Endothelial cell of umbilical vein (primary cell): ENCODE measurements at regions of chr17 and their contacts with region 1.

Region 1: GRCh38 chr17:64281962-64282727 is 19.1 kb upstream of the TEX2 start:
- DNase-seq: peak; percentile 87
- H3K4me3 ChIP-seq: no peak overlapping the region
- H3K27ac ChIP-seq: no peak overlapping the region
- H3K4me1 ChIP-seq: peaks cover 17% of the 10 kb centered on the region
- H3K27me3 ChIP-seq: no peaks in the 10 kb centered on the region
- CTCF ChIP-seq: peak; percentile 58 to 61
- POLR2A ChIP-seq: no peak

Region 2: GRCh38 chr17:64051153-64051552 is 231.0 kb before region 1 on chr17:
- CTCF ChIA-PET with region 1: no interaction called
- POLR2A ChIA-PET with region 1: no interaction called
- dilution Hi-C with region 1: no loop called
- intact Hi-C with region 1: no loop called
- DNase-seq: no peak
- H3K4me3 ChIP-seq: no peak overlapping the region
- H3K27ac ChIP-seq: no peak overlapping the region
- H3K4me1 ChIP-seq: no peaks in the 10 kb centered on the region
- H3K27me3 ChIP-seq: no peaks in the 10 kb centered on the region
- CTCF ChIP-seq: no peak
- POLR2A ChIP-seq: no peak

Region 3: DNA sequence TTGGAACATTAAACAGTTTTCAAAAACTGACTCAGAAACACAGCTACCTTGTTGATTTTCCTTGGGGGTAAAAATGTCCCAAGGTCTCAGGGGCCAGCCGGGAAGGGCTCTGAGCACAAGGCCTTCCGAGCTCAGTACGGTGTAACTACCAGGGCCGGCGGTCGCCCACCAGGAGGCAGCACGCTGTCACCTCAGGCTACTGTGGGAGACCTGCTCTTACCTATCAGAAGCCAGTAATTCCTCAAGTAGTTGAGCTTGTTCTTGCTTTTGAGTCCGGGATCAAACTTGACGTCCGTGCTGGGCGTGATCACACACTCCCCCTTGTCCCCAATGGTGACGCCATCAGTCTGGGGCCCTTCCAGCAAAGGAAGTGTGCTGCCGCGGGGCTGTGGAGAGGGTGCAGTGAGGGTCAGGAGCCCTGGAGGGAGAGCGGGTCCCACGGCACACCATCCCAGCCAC is 218.3 kb before region 1 on chr17:
- CTCF ChIA-PET with region 1: interaction called, 15 read pairs
- POLR2A ChIA-PET with region 1: no interaction called
- dilution Hi-C with region 1: no loop called
- intact Hi-C with region 1: loop called (anchors 10 kb)
- DNase-seq: peak; percentile 73
- H3K4me3 ChIP-seq: no peak overlapping the region
- H3K27ac ChIP-seq: no peak overlapping the region
- H3K4me1 ChIP-seq: peaks cover 22% of the 10 kb centered on the region
- H3K27me3 ChIP-seq: no peaks in the 10 kb centered on the region
- CTCF ChIP-seq: peak; percentile 60 to 71
- POLR2A ChIP-seq: no peak

Region 4: GRCh38 chr17:64174686-64175456 is 107.3 kb before region 1 on chr17:
- CTCF ChIA-PET with region 1: interaction called, 7 read pairs
- POLR2A ChIA-PET with region 1: no interaction called
- dilution Hi-C with region 1: no loop called
- intact Hi-C with region 1: loop called (anchors 1 kb)
- DNase-seq: peak; percentile 67
- H3K4me3 ChIP-seq: no peak overlapping the region
- H3K27ac ChIP-seq: peak overlapping the region; percentile 19
- H3K4me1 ChIP-seq: peaks cover 40% of the 10 kb centered on the region
- H3K27me3 ChIP-seq: no peaks in the 10 kb centered on the region
- CTCF ChIP-seq: no peak
- POLR2A ChIP-seq: no peak

Region 5: DNA sequence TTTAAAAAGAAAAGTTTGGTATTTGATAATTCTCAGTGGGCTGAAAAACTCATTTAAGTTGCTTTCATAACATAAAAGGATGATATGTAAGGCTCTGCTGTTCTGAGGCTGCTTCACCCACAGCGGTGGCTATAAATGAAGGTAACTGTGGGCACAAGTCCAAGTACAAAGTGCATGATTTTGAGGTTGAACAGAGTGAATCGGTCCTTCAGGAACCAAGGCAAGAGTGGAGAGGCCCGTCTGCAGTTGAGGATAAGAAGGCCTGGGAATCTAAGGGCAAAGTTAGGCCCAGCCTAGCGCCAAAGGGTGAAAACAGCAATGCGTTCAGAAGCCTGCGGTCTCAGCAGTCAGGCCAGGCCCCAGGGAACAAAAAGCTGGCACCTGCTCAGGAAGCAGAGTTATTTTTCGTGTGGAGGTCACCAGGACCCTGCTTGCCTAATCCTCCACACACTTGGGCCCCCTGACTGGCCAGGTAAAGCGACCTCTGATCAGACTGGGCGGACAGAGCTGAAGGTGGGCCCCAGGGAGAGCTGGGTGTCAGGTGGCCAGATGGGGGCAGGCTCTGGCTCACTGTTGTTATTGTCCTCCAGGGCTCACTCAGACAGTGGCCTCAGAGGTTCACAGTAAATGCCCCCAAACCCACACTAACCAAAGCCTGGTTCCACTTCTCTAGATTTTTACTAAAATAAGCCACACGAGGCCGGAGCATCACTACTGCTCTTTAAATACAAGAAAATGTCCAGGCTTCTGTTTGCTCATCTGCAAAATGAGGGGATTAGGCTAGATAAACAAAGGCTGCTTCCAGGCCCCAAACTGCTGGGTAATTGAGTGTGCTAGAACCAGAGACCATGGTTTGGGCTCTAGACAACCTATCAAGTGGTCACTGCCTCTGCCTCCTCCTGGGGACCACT is 65.6 kb before region 1 on chr17:
- CTCF ChIA-PET with region 1: interaction called, 12 read pairs
- POLR2A ChIA-PET with region 1: no interaction called
- dilution Hi-C with region 1: no loop called
- intact Hi-C with region 1: no loop called
- DNase-seq: peak; percentile 75
- H3K4me3 ChIP-seq: no peak overlapping the region
- H3K27ac ChIP-seq: peak overlapping the region; percentile 74
- H3K4me1 ChIP-seq: peaks cover 28% of the 10 kb centered on the region
- H3K27me3 ChIP-seq: no peaks in the 10 kb centered on the region
- CTCF ChIP-seq: peak in 1 of 2 donors; percentile 24
- POLR2A ChIP-seq: no peak